ENCODE measurements at regions of chr16 and their contacts with region 1.

Region 1: DNA sequence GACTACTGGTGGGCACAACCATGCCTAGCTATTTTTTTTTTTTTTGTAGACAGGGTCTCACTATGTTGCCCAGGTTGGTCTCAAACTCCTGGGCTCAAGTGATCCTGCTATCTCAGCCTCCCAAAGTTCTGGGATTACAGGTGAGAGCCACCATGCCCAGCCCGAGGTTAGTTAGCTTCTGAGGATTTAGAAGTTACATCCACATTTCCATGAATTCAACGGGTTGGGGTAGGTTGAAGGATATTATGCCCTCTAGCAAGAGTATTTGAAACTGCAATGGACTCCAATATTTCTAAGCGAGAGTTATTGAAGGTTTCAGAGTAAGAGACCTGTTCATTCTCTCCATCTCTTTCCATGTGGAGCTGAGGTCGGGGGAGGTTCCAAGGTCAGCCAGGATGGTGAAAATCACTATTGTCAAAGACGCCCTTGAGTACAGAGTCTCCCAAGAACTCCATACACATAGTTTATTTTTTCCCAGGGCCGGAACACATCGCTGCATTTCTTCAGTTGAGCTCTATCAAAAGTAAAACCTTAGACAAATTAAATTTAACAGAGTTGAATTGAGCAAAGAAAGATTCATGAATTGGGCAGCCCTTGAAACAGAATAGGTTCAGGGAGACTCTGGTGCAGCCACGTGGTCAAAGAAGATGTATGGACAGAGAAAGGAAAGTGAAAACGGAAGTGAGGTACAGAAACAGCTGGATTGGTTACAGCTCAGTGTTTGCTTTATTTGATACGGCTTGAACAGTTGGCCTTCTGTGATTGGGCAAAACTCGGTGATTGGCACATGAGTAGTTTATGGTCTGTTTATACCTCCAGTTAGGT is 19.0 kb upstream of the ITPRIPL2 start:
- DNase-seq: no peak

Region 2: DNA sequence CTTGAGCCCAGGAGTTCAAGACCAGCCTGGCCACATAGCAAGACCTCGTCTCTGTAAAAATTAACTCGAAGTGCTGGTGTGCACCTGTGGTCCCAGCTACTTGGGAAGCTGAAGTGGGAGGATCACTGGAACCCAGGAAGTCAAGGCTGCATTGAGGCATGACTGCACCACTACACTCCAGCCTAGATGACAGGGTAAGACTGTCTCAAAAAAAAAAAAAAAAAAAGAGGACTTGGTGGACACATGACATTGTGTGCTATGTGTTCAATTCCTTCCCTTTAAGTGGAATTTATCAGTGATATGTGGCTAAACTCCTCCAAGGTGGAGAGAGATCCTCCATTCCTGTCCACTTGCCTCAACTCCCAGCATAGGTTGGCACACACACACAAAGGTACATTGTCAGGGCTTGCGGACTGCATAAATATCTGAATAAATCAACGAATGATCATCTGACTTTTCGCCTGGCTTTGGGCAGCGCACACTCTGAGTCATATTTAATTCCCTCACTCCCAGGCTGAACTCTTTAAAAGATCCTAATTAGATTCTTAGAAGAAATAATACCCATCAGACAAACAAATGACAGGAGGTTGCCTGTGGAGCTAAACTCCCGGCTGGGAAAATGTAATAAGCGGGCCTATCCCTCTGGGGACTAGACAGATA is 48.3 kb after region 1 on chr16:
- intact Hi-C with region 1: no loop called
- DNase-seq: no peak

Region 3: DNA sequence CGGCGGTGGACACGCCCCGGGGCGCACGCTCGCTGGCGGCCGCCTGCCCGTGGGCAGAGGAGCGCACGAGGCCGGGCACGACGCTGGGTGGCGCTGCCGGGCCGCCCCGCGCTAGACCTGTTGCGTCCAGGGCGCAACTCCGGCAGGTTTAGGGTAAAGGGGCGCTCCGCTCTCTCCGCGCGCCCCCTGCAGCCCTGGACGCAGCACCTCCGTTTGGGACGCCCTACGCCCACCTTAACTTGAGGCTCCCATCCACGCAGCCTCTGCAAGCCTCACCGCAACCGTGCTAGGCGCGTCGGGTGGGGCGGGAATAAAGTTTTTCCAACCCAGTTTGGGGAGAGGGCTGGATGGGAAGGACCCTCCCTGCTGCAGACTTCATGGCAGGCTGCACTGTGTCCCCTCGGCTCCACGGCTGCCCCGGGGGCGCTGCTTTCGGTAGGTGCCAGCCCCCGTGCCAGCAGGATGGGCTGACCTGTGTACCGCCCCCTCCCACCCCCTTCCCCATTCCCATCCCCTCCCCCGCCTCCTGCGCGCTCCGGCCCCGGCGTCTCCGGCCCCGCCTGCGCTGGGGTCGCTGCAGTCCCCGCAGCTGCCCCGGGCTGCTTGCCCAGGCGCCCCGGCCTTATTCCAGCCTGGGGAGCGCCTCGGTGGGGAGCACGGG is 73.1 kb after region 1 on chr16 and contains the start of gene SYT17:
- intact Hi-C with region 1: loop called in 1 of 2 experiments (anchors 10 kb)
- DNase-seq: peak; percentile 88
- total RNA-seq, gene SYT17: 1.2 to 2.8 TPM